ENCODE measurements at regions of chr11 and their contacts with region 1.

Region 1: GRCh38 chr11:88231894-88232482 is 56.7 kb upstream of the RAB38 start:
- DNase-seq: peak; percentile 23
- ATAC-seq: peak; percentile 80
- H3K4me3 Mint-ChIP-seq: no peak overlapping the region
- H3K27ac Mint-ChIP-seq: no peak overlapping the region
- H3K4me1 Mint-ChIP-seq: no peaks in the 10 kb centered on the region
- H3K27me3 Mint-ChIP-seq: no peaks in the 10 kb centered on the region
- CTCF ChIP-seq: peak; percentile 68

Region 2: GRCh38 chr11:88535916-88536547 is 304.0 kb after region 1 on chr11:
- CTCF ChIA-PET with region 1: interaction called, 10 read pairs
- POLR2A ChIA-PET with region 1: no interaction called
- intact Hi-C with region 1: no loop called
- DNase-seq: no peak
- ATAC-seq: peak; percentile 96
- H3K4me3 Mint-ChIP-seq: no peak overlapping the region
- H3K27ac Mint-ChIP-seq: no peak overlapping the region
- H3K4me1 Mint-ChIP-seq: peaks cover 4% of the 10 kb centered on the region
- H3K27me3 Mint-ChIP-seq: peaks cover 3% of the 10 kb centered on the region
- CTCF ChIP-seq: no peak

Region 3: DNA sequence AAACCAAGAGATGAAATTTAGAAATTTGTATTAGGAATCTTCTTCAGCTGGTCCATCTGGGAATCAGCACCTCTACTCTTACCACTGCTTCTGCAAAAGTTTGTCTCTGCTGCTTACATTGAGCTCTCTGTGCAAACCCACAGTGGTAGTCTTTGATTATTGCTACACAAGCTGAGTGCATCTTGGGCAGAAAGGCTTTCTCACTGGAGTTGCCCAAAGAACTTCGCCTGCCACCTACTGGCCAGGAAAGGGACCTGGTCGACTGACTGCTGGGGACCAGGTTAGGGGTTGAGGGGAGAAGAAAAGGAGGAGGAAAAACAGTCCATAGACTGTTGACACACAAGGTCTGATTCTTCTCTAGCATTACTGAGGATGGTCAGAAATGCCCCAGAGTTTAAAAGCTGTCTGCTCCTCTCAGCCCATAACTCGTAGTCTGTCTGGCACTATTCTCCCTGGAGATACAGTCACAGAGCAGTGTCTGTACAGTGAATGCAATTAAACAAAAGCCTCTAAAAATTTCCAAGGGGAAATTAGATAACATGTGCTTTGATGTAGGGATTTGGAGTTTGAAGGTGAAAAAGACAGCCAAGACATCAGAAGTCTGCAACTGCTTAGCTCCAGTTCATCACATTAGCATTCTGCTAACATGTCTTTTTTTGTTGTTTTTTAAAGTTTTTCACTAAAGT is 320.5 kb after region 1 on chr11:
- CTCF ChIA-PET with region 1: interaction called, 10 read pairs
- POLR2A ChIA-PET with region 1: no interaction called
- intact Hi-C with region 1: loop called (anchors 5 kb)
- DNase-seq: peak; percentile 72
- ATAC-seq: peak; percentile 86
- H3K4me3 Mint-ChIP-seq: no peak overlapping the region
- H3K27ac Mint-ChIP-seq: no peak overlapping the region
- H3K4me1 Mint-ChIP-seq: peaks cover 5% of the 10 kb centered on the region
- H3K27me3 Mint-ChIP-seq: no peaks in the 10 kb centered on the region
- CTCF ChIP-seq: peak; percentile 65